WTC11 (cell line): ENCODE measurements at regions of chr6 and their contacts with region 1.

Region 1: GRCh38 chr6:68975064-68975463 is 340.0 kb downstream of the ADGRB3 start:
- DNase-seq: peak; percentile 19
- ATAC-seq: peak; percentile 90
- H3K4me3 Mint-ChIP-seq: no peak overlapping the region
- H3K27ac Mint-ChIP-seq: no peak overlapping the region
- H3K4me1 Mint-ChIP-seq: peaks cover 3% of the 10 kb centered on the region; the same call in 1 of the 2 replicates
- H3K27me3 Mint-ChIP-seq: no peaks in the 10 kb centered on the region
- CTCF ChIP-seq: no peak

Region 2: DNA sequence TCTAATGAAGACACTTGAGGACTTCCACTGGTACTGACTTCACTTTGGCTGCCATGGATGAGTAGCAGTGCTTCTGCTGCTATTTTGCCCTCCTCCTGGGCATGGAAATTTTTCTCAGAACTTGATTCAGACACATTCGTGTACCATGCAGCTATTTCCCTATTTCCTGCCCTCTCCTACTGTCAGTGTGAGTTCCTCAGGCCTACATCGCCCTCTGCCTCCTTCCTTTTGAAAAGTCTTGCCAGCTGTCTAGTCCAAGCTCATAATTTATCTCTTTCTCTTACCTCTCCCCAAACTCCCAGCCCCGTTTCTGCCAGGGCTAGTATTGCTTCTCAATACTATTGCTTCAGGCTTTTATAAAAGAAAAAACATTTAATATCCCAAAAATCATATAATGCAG is 130.2 kb after region 1 on chr6:
- CTCF ChIA-PET with region 1: interaction called, 18 read pairs
- POLR2A ChIA-PET with region 1: no interaction called
- DNase-seq: peak; percentile 16
- ATAC-seq: peak; percentile 81
- H3K4me3 Mint-ChIP-seq: no peak overlapping the region
- H3K27ac Mint-ChIP-seq: no peak overlapping the region
- H3K4me1 Mint-ChIP-seq: peaks cover 5% of the 10 kb centered on the region
- H3K27me3 Mint-ChIP-seq: no peaks in the 10 kb centered on the region
- CTCF ChIP-seq: no peak